ENCODE measurements at regions of chr7 and their contacts with region 1.

Region 1: GRCh38 chr7:129367700-129368388 is 66.4 kb upstream of the STRIP2 start:
- DNase-seq: peak; percentile 82
- H3K4me3 ChIP-seq: no peak overlapping the region
- H3K27ac ChIP-seq: no peak overlapping the region
- H3K4me1 ChIP-seq: no peaks in the 10 kb centered on the region
- H3K27me3 ChIP-seq: no peaks in the 10 kb centered on the region

Region 2: GRCh38 chr7:129468087-129468486 is 100.2 kb after region 1 on chr7:
- in situ Hi-C with region 1: loop called (anchors 10 kb)
- DNase-seq: peak; percentile 83
- H3K4me3 ChIP-seq: no peak overlapping the region
- H3K27ac ChIP-seq: peak overlapping the region; percentile 28
- H3K4me1 ChIP-seq: peaks cover 40% of the 10 kb centered on the region
- H3K27me3 ChIP-seq: no peaks in the 10 kb centered on the region

Region 3: GRCh38 chr7:129597672-129598071 is 229.8 kb after region 1 on chr7:
- in situ Hi-C with region 1: no loop called
- DNase-seq: no peak
- H3K4me3 ChIP-seq: no peak overlapping the region
- H3K27ac ChIP-seq: no peak overlapping the region
- H3K4me1 ChIP-seq: peaks cover 24% of the 10 kb centered on the region
- H3K27me3 ChIP-seq: no peaks in the 10 kb centered on the region

Region 4: DNA sequence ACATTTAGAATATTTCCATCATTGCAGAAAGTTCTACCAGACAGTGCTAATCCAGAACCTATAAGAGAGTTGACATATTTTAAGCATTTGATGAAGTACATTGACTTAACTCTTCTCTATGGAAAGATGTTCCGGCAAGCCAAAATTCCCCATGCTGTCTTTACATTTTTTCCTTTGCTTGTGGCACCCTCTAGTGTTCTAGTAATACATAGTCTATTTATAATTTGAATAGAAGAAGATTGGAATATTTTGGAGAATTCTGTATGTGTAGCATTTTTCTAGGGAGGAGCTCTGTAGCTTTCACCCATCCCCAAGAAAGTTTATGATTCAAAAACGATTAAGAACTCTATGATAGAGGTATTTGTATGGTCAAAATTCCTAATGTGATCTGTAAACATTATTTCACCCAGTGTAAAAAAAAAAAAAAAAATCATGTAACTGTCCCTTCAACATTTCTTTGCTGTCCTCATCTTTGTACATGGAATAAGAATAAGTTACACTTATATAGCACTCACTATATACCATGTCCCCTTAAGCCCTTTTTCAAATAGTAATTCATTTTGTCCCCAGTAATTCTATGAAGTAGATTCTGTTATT is 276.9 kb after region 1 on chr7:
- in situ Hi-C with region 1: loop called (anchors 10 kb)
- DNase-seq: peak; percentile 74
- H3K4me3 ChIP-seq: no peak overlapping the region
- H3K27ac ChIP-seq: no peak overlapping the region
- H3K4me1 ChIP-seq: peaks cover 15% of the 10 kb centered on the region
- H3K27me3 ChIP-seq: no peaks in the 10 kb centered on the region

Region 5: GRCh38 chr7:129825496-129826267 is 457.8 kb after region 1 on chr7:
- in situ Hi-C with region 1: loop called (anchors 25 kb)
- DNase-seq: peak; percentile 89
- H3K4me3 ChIP-seq: peak overlapping the region; percentile 83
- H3K27ac ChIP-seq: no peak overlapping the region
- H3K4me1 ChIP-seq: peaks cover 12% of the 10 kb centered on the region
- H3K27me3 ChIP-seq: no peaks in the 10 kb centered on the region

Region 6: DNA sequence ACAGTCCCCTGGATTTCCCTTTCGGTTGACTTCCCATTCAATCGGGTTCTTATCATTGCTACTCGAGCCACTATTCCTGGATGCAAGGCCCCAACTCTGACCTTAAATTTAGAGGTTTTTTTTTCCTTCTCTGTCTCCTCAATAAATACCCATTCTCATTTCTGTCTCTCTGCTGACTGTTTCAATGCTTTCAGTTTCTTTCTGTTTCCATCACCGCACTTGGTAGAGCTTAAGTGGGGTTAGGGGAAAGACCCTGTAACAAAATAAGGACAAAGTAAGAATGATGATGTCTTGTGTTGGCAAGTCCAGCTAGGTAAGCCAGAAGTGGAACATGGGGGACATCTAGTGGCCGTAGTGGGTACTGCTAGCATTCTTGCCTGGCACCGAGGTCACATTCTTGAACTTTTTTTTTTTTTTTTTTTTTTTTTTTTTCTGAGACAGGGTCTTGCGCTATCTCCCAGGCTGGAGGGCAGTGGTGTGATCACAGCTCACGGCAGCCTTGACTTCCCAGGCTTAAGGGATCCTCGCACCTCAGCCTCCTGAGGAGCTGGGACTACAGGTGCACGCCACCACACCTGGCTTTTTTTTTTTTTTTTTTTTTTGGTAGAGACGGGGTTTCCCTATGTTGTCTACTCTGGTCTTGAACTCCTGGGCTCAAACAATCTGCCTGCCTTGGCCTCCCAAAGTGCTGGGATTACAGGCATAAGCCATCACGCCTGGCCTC is 643.0 kb after region 1 on chr7:
- in situ Hi-C with region 1: loop called (anchors 25 kb)
- DNase-seq: peak; percentile 72
- H3K4me3 ChIP-seq: no peak overlapping the region
- H3K27ac ChIP-seq: peak overlapping the region; percentile 93
- H3K4me1 ChIP-seq: peaks cover 12% of the 10 kb centered on the region
- H3K27me3 ChIP-seq: no peaks in the 10 kb centered on the region

Measured in GM23248 (cell line).